ENCODE measurements at regions of chr20 and their contacts with region 1.

Region 1: DNA sequence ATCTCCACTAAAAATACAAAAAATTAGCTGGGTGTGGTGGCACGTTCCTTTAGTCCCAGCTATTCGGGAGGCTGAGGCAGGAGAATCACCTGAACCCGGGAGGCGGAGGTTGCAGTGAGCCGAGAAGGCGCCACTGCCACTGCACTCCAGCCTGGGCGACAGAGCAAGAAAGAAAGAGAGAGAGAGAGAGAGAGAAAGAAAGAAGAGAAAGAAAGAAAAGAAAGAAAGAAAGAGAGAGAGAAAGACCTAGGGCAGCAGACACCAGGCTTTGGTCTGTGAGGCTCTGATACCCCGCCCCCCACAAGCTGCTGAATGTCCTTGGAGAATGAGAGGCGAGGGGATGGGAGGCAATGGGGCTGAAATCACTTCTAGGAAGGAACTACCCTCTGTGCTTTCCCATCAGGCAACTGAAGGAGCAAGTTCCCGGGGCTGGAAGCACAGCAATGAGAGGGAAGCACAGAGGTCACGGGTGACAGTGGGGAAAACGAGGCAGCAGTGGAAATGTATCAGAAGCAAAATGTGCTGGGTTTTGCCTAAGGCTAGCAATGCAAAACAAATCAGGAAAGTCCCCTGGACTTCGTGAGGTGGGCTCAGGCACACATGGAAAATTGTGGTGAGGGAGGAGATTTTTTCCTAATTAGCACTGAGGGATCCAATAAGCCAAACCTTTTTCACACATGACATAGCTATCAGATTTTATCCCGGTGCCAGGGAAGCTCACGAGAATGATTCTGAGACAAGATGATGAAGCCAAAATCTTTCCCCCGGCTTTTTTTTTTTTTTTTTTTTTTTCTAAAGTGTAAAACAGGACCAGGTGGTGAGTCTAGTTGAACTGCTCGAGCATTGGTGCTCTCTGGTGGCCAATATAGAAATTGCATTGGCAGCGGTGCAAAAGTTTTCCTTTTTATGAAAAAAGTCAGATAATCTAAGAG is 16.9 kb upstream of the ARFGEF2 start:
- DNase-seq: no peak
- ATAC-seq: peak; percentile 80
- H3K4me3 ChIP-seq: peak overlapping the region; percentile 7; the same call in 1 of the 2 replicates
- H3K27ac ChIP-seq: peak overlapping the region; percentile 38; the same call in 1 of the 2 replicates
- H3K4me1 ChIP-seq: peaks cover 28% of the 10 kb centered on the region
- H3K27me3 ChIP-seq: no peaks in the 10 kb centered on the region
- CTCF ChIP-seq: peak; percentile 65 to 82 (median 79); a peak in 5 of 6 replicates
- EP300 ChIP-seq: no peak
- POLR2A ChIP-seq: no peak
- RAD21 ChIP-seq: peak; percentile 99

Region 2: GRCh38 chr20:48635433-48636310 is 269.0 kb before region 1 on chr20:
- CTCF ChIA-PET with region 1: interaction called, 12 read pairs
- POLR2A ChIA-PET with region 1: no interaction called
- RAD21 ChIA-PET with region 1: no interaction called
- SMC1A ChIA-PET with region 1: interaction called, 4 read pairs
- in situ Hi-C with region 1: no loop called
- intact Hi-C with region 1: no loop called
- DNase-seq: no peak
- ATAC-seq: peak; percentile 92
- H3K4me3 ChIP-seq: no peak overlapping the region
- H3K27ac ChIP-seq: no peak overlapping the region
- H3K4me1 ChIP-seq: no peaks in the 10 kb centered on the region
- H3K27me3 ChIP-seq: no peaks in the 10 kb centered on the region
- CTCF ChIP-seq: peak; percentile 59 to 76 (median 61)
- EP300 ChIP-seq: no peak
- POLR2A ChIP-seq: 0 out of 2 replicates have a peak, but pooled peaks have one; percentile 38
- RAD21 ChIP-seq: peak; percentile 64

Region 3: DNA sequence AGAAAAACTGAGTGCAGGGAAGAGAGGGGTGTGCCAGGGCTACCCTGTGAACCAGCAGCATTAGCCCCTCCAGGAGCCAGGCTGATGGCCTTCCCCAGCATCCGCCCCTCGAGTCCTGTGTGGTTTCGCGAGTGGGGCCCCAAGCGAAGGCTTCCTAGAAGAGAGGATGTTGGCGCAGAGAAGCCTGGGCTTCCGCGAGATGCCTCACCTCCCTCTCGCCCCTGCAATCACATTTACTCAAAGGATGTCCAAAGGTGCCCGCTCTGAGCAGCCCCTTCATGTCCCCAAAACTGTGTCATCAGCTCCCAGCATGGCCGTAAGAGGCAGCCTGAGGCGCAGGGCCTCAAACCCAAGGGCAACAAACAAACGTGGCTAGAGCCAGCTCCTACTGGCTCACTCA is 188.5 kb before region 1 on chr20:
- CTCF ChIA-PET with region 1: interaction called, 5 read pairs
- POLR2A ChIA-PET with region 1: no interaction called
- RAD21 ChIA-PET with region 1: interaction called, 10 read pairs
- SMC1A ChIA-PET with region 1: interaction called, 5 read pairs
- in situ Hi-C with region 1: no loop called
- intact Hi-C with region 1: loop called (anchors 10 kb)
- DNase-seq: no peak
- ATAC-seq: no peak
- H3K4me3 ChIP-seq: no peak overlapping the region
- H3K27ac ChIP-seq: peak overlapping the region; percentile 87
- H3K4me1 ChIP-seq: peaks cover 84% of the 10 kb centered on the region
- H3K27me3 ChIP-seq: no peaks in the 10 kb centered on the region
- CTCF ChIP-seq: no peak
- EP300 ChIP-seq: no peak
- POLR2A ChIP-seq: no peak
- RAD21 ChIP-seq: no peak

Region 4: DNA sequence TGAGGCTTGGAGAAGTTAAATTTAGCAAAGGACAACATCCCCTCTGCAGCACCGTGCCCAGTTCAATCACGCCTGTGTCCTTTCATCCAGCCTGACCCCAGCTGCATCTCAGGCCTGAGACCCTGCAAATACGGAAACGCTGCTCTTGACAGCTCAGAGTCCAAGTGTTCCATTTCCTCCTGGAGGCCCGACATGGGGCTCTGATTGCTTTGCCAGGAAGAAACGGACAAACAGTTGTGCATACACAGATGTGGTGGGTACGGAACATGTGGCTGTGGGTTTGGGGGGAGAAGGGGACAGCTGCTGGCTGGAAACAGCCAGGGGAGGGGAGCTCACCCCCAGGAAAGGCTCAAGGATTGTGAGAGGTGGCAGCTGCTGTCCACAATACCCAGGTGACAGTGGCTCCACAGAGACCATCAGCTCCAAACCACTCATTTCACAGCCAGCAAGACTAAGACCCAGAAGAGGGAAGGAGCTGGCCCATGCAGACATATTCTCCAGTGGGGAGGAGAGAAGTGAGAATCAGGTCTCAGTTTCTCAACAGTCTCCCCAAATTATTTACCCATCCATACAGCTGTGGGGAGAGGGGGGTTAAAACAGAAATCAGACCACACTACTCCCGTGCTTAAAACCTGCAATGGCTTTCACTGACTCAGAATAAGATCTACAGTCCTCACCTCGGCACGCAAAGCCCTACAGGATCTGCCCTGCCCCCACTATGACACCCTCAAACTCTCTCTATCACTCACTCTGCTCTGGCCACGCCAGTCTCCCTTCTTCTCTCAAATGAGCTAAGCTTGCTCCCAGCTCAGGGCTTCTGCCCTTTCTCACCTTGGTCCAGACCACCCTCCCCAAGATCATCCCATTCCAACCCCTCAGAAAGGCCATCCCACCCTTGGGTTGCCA is 166.0 kb before region 1 on chr20:
- CTCF ChIA-PET with region 1: interaction called, 3 read pairs
- POLR2A ChIA-PET with region 1: interaction called, 6 read pairs
- RAD21 ChIA-PET with region 1: interaction called, 20 read pairs
- SMC1A ChIA-PET with region 1: interaction called, 8 read pairs
- in situ Hi-C with region 1: no loop called
- intact Hi-C with region 1: loop called (anchors 2 kb)
- DNase-seq: peak; percentile 92
- ATAC-seq: peak; percentile 83
- H3K4me3 ChIP-seq: peak overlapping the region; percentile 41; the same call in 1 of the 2 replicates
- H3K27ac ChIP-seq: peak overlapping the region; percentile 95
- H3K4me1 ChIP-seq: peaks cover 54% of the 10 kb centered on the region
- H3K27me3 ChIP-seq: no peaks in the 10 kb centered on the region
- CTCF ChIP-seq: no peak
- EP300 ChIP-seq: peak; percentile 99
- POLR2A ChIP-seq: no peak
- RAD21 ChIP-seq: peak; percentile 17; the same call in 1 of the 2 replicates

Region 5: GRCh38 chr20:48828022-48828743 is 76.4 kb before region 1 on chr20:
- CTCF ChIA-PET with region 1: interaction called, 21 read pairs
- POLR2A ChIA-PET with region 1: interaction called, 9 read pairs
- RAD21 ChIA-PET with region 1: interaction called, 41 read pairs
- SMC1A ChIA-PET with region 1: interaction called, 34 read pairs
- in situ Hi-C with region 1: no loop called
- intact Hi-C with region 1: loop called (anchors 2 kb)
- DNase-seq: no peak
- ATAC-seq: peak; percentile 53
- H3K4me3 ChIP-seq: peak overlapping the region; percentile 62
- H3K27ac ChIP-seq: peak overlapping the region; percentile 76
- H3K4me1 ChIP-seq: peaks cover 34% of the 10 kb centered on the region
- H3K27me3 ChIP-seq: no peaks in the 10 kb centered on the region
- CTCF ChIP-seq: peak in 1 of 3 experiments; percentile 8; a peak in 1 of 6 replicates
- EP300 ChIP-seq: no peak
- POLR2A ChIP-seq: peak; percentile 74
- RAD21 ChIP-seq: peak; percentile 21; the same call in 1 of the 2 replicates

Region 6: DNA sequence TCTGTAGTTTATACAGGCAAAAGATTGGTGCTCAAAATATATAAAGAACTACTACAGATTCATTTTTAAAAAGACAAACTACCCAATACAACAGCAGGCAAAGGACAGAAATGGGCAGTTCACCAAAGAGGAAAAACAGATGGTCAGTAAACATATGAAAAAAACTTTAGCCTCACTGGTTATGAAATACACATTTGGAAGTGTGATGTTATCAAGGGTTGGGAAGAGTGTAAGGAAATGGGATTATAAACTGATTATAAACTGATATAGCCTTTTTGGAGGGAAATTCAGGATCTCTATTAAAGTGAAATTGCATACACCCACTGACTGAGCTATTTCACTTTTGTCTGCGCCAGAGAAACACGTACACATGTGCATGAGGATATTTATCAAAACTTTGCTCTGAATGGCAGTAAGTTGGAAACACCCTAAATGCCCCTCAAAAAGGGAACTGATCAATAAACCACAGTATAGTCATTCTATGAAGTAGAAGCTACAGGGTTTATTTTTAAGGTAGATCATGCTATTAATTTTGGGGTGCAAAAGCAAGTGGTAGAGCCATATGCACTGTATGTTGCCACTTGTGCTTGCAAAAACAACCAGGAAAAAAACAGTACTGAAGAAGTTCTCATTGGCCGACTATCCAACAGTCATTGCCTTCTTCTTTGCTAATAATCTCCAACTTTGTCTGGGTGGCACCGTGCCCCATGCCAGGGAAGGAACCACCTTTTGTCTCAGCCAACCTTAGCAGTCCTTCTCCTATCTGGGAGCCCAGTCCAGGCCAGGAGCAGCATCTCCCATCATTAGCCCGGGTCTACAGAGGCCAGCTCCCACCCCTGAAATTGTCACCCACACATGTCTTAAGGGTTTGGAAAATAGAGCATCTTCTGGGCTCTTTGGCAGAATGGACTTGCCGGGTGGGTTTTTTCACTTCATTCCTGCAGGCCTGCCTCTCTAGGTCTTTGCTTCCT is 15.2 kb before region 1 on chr20:
- CTCF ChIA-PET with region 1: interaction called, 13 read pairs
- POLR2A ChIA-PET with region 1: interaction called, 3 read pairs
- RAD21 ChIA-PET with region 1: interaction called, 4 read pairs
- SMC1A ChIA-PET with region 1: interaction called, 10 read pairs
- in situ Hi-C with region 1: no loop called
- intact Hi-C with region 1: no loop called
- DNase-seq: no peak
- ATAC-seq: peak; percentile 89
- H3K4me3 ChIP-seq: 0 out of 2 replicates have a peak overlapping the region, but pooled peaks have one; percentile 39
- H3K27ac ChIP-seq: peak overlapping the region; percentile 43; the same call in 1 of the 2 replicates
- H3K4me1 ChIP-seq: peaks cover 6% of the 10 kb centered on the region
- H3K27me3 ChIP-seq: no peaks in the 10 kb centered on the region
- CTCF ChIP-seq: no peak
- EP300 ChIP-seq: peak in 1 of 2 experiments; percentile 77; a peak in 1 of 4 replicates
- POLR2A ChIP-seq: no peak
- RAD21 ChIP-seq: no peak

Region 7: GRCh38 chr20:48962976-48963771 is 58.5 kb after region 1 on chr20:
- CTCF ChIA-PET with region 1: no interaction called
- POLR2A ChIA-PET with region 1: no interaction called
- RAD21 ChIA-PET with region 1: no interaction called
- SMC1A ChIA-PET with region 1: no interaction called
- in situ Hi-C with region 1: no loop called
- intact Hi-C with region 1: no loop called
- DNase-seq: no peak
- ATAC-seq: no peak
- H3K4me3 ChIP-seq: no peak overlapping the region
- H3K27ac ChIP-seq: no peak overlapping the region
- H3K4me1 ChIP-seq: no peaks in the 10 kb centered on the region
- H3K27me3 ChIP-seq: no peaks in the 10 kb centered on the region
- CTCF ChIP-seq: no peak
- EP300 ChIP-seq: no peak
- POLR2A ChIP-seq: no peak
- RAD21 ChIP-seq: no peak